Activated B cell treated with CpG ODN at 0.5 μM for 24 hours (primary cell): ENCODE measurements at regions of chr16 and their contacts with region 1.

Region 1: DNA sequence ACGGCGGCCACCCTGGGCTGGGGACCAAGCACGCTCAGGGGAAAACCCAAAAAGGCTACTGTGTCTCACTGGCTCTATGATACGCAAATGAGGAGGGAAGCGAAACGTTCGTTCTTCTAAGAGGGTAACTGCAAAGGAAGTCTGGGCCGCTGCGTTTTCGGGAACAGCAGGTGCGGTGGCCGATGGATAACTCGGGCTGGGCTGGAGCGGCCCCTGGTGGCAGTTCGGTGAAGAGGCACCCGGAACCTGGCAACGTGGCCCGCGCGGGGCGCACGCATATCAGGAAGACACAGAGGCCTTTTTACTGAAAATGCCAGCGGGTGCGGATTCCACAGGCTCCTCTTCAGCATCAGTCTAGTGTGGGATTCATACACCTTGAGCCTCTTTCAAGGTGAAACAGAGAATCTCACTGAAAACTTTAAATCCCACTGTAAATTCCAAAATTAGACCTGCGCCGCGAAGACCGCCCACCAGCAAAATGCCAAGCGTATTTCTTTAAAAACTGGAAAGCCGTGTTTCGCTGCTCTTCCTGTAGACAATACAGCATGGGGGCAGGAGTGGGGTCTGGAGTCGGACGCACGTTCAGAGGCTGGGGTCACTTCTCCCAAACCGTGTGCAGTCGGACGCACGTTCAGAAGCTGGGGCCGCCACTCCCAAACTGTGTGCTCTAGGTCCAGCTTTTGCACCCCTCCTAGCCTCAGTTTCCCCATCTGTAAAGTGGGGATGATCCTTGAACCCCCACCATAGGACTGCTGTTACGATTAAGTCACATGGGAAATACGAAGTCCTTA is 44.4 kb upstream of the METTL9 start:
- DNase-seq: peak; percentile 98
- ATAC-seq: peak; percentile 94
- H3K4me3 Mint-ChIP-seq: peak overlapping the region; percentile 83
- H3K27ac Mint-ChIP-seq: peak overlapping the region; percentile 94
- H3K4me1 Mint-ChIP-seq: peaks cover 35% of the 10 kb centered on the region
- H3K27me3 Mint-ChIP-seq: no peaks in the 10 kb centered on the region
- CTCF ChIP-seq: peak; percentile 91

Region 2: DNA sequence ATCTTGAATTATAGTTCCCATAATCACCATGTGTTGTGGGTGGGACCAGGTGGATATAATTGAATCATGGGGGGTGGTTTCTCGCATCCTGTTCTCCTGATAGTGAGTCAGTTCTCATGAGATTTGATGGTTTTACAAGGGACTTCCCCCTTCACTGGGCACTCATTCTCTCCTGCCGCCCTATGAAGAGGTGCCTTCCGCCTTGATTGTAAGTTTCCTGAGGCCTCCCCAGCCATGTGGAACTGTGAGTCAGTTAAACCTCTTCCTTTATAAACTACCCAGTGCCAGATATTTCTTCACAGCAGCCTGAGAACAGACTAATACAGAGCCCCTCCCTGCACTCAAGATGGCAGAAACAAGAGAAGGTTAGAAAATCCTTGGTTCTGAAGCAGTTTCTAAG is 370.2 kb before region 1 on chr16:
- CTCF ChIA-PET with region 1: interaction called, 5 read pairs
- POLR2A ChIA-PET with region 1: no interaction called
- intact Hi-C with region 1: loop called (anchors 1 kb)
- DNase-seq: no peak
- ATAC-seq: peak; percentile 65
- H3K4me3 Mint-ChIP-seq: no peak overlapping the region
- H3K27ac Mint-ChIP-seq: peak overlapping the region; percentile 85
- H3K4me1 Mint-ChIP-seq: peaks cover 21% of the 10 kb centered on the region
- H3K27me3 Mint-ChIP-seq: peaks cover 2% of the 10 kb centered on the region
- CTCF ChIP-seq: no peak

Region 3: DNA sequence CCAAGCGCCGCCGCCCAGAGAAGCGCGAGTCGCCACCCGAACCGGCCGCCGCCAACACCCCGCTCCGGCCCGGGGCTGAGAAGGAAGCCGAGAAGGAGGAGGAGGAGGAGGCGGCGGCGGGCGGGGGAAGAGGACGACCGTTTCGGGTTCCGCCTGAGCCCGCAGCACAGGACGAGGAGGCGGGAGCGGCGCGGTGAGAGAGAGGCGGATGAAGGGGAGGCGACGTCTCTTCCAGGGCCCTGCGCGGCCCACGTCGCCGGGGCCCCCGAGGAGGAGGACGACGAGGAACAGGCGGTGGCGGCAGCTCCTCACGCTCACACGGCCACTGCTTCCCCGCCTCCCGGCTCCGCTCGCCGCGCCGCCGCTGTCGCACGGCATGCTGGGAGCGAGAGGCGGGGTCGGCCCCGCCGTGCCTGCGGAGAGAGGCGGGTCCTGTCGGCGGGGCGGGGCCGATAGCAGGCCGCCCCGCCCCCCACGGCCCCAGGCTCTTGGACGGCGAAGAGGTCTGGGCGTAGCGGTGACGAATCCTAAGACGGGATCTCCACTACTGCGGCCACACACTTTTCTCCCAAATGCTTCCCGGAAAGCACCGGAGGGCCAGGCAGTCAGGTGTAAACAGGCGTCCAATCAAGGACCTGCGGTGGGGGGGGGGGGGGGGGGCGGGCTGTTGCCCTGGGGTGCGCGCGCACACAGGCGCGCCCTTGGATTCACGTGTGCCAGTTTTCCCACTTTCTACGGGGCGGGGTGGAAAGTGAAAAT is 52.9 kb before region 1 on chr16:
- CTCF ChIA-PET with region 1: no interaction called
- POLR2A ChIA-PET with region 1: interaction called, 5 read pairs
- intact Hi-C with region 1: loop called (anchors 5 kb)
- DNase-seq: peak; percentile 99
- ATAC-seq: peak; percentile 71
- H3K4me3 Mint-ChIP-seq: peak overlapping the region; percentile 89
- H3K27ac Mint-ChIP-seq: peak overlapping the region; percentile 85
- H3K4me1 Mint-ChIP-seq: peaks cover 35% of the 10 kb centered on the region
- H3K27me3 Mint-ChIP-seq: no peaks in the 10 kb centered on the region
- CTCF ChIP-seq: no peak

Region 4: DNA sequence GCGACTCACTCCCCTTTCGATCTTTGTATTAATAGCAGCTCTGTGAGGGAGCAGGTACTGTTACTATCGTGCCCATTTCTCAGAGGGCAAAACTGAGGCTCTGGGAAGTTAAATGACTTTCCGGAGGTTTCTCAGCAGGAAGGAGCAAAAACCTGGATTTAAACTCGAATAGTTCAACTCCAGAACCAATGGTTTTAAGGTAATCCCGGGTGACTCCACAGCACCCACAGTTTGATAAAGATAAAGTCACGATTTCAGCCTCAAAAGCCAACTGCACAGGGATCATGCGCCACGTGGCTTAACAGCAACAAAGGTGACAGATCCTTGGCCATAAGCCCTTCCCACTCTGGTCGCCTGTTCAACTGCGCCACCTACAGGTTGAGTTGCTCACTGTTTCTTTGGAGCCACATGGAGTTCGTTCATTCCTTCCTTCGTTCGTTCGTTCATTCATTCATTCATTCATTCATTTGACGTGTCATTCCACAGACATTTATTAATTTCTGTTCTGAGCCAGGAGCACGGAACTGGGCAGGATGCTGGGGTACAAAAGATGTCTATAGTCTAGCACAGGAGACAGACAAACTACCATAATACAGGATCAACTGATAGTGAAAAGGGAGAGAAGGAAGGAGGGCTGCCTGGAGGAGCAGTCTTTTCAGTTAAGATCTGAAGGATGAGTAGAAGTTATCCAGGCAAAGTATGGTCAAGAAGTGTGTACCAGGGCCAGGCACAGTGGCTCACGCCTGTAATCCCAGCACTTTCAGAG is 1393.8 kb after region 1 on chr16:
- CTCF ChIA-PET with region 1: no interaction called
- POLR2A ChIA-PET with region 1: no interaction called
- intact Hi-C with region 1: loop called (anchors 1 kb)
- DNase-seq: peak; percentile 26
- ATAC-seq: peak; percentile 73
- H3K4me3 Mint-ChIP-seq: peak overlapping the region; percentile 46
- H3K27ac Mint-ChIP-seq: no peak overlapping the region
- H3K4me1 Mint-ChIP-seq: peaks cover 11% of the 10 kb centered on the region
- H3K27me3 Mint-ChIP-seq: peaks cover 26% of the 10 kb centered on the region
- CTCF ChIP-seq: no peak